WTC11 (cell line): ENCODE measurements at regions of chr1 and their contacts with region 1.

Region 1: GRCh38 chr1:18470671-18471355 is 9.9 kb upstream of the KLHDC7A start:
- DNase-seq: no peak
- ATAC-seq: no peak
- H3K4me3 Mint-ChIP-seq: no peak overlapping the region
- H3K27ac Mint-ChIP-seq: no peak overlapping the region; the same call in 1 of the 2 replicates
- H3K4me1 Mint-ChIP-seq: peaks cover 36% of the 10 kb centered on the region
- H3K27me3 Mint-ChIP-seq: peaks cover 16% of the 10 kb centered on the region
- CTCF ChIP-seq: no peak

Region 2: GRCh38 chr1:18486195-18486594 is 15.4 kb after region 1 on chr1:
- CTCF ChIA-PET with region 1: interaction called, 18 read pairs
- POLR2A ChIA-PET with region 1: no interaction called
- DNase-seq: peak; percentile 62
- ATAC-seq: peak; percentile 78
- H3K4me3 Mint-ChIP-seq: no peak overlapping the region
- H3K27ac Mint-ChIP-seq: no peak overlapping the region
- H3K4me1 Mint-ChIP-seq: peaks cover 35% of the 10 kb centered on the region
- H3K27me3 Mint-ChIP-seq: peaks cover 7% of the 10 kb centered on the region
- CTCF ChIP-seq: no peak